Panc1 (cell line): ENCODE measurements at regions of chrX and their contacts with region 1.

Region 1: GRCh38 chrX:16418650-16419049 is 231.3 kb upstream of the S100G start:
- DNase-seq: no peak
- ATAC-seq: no peak
- H3K4me3 ChIP-seq: no peak overlapping the region
- H3K27ac ChIP-seq: no peak overlapping the region
- H3K4me1 ChIP-seq: no peaks in the 10 kb centered on the region
- H3K27me3 ChIP-seq: no peaks in the 10 kb centered on the region
- CTCF ChIP-seq: no peak

Region 2: GRCh38 chrX:16310326-16310725 is 108.3 kb before region 1 on chrX:
- CTCF ChIA-PET with region 1: interaction called, 14 read pairs
- POLR2A ChIA-PET with region 1: no interaction called
- in situ Hi-C with region 1: no loop called
- intact Hi-C with region 1: no loop called
- DNase-seq: no peak
- ATAC-seq: no peak
- H3K4me3 ChIP-seq: no peak overlapping the region
- H3K27ac ChIP-seq: no peak overlapping the region
- H3K4me1 ChIP-seq: no peaks in the 10 kb centered on the region
- H3K27me3 ChIP-seq: no peaks in the 10 kb centered on the region
- CTCF ChIP-seq: no peak

Region 3: DNA sequence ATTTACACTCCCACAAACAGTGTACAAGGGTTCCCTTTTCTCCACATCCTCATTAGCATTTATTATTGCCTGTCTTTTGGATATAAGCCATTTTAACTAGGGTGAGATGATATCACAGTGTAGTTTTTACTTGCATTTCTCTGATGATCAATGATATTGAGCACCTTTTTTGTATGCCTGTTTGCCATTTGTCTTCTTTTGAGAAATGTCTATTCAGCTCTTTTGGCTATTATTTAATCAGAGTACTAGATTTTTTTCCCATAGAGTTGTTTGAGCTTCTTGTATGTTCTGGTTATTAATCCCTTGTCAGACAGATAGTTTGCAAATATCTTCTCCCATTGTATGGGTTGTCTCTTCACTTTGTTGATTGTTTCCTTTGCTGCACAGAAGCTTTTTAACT is 60.7 kb before region 1 on chrX:
- CTCF ChIA-PET with region 1: no interaction called
- POLR2A ChIA-PET with region 1: no interaction called
- in situ Hi-C with region 1: no loop called
- intact Hi-C with region 1: no loop called
- DNase-seq: no peak
- ATAC-seq: no peak
- H3K4me3 ChIP-seq: no peak overlapping the region
- H3K27ac ChIP-seq: no peak overlapping the region
- H3K4me1 ChIP-seq: no peaks in the 10 kb centered on the region
- H3K27me3 ChIP-seq: no peaks in the 10 kb centered on the region
- CTCF ChIP-seq: no peak